ENCODE measurements at regions of chr6 and their contacts with region 1.

Region 1: DNA sequence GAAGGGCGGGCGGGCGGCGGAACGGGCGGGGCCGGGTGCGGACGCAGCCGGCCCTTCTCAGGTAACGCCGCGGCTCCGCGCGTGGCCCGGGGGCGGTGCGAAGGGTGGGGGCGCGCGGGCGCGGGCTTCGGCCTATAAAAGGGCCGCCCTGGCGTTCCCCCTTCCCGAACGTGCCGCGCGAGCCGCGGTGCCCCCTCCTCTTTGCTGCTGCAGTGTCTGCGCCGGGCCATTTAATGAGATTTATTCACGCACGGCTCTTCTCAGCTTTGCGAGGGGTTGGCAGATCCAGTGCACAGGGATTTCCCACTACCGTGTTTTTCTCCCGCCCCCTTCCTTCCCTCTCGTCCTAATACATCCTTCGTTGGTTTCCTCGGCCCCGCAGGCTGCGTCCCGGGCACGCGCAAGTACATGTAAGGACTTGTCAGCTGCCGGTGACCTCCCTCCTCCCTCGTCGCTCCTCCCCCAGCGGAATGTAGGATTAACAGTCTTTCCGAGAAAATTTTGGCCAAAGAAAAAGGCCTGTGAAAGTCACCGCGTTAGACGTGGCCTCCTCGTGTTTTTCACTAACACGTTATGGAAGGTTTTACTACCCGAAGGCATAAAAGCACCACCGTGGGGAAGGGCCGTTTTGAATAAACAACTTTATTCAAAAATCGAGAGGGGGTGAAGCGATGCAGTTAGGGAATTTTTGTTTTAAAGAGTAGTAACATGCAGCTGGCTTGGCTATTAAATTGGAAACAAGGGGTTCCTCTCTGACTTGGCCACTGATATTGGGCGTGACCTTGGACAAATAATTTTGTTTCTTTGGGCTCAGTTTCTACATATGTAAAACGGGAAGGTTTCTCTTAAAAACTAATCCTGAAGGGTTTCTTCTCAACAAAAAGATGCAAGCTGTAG is 966 bp upstream of the REV3L start:
- DNase-seq: peak; percentile 92
- H3K4me3 Mint-ChIP-seq: peak overlapping the region; percentile 97
- H3K27ac Mint-ChIP-seq: peak overlapping the region; percentile 99
- H3K4me1 Mint-ChIP-seq: peaks cover 47% of the 10 kb centered on the region
- H3K27me3 Mint-ChIP-seq: no peaks in the 10 kb centered on the region

Region 2: GRCh38 chr6:110958329-110959192 is 525.4 kb before region 1 on chr6 and contains the start of gene GTF3C6:
- CTCF ChIA-PET with region 1: no interaction called
- intact Hi-C with region 1: loop called (anchors 5 kb)
- DNase-seq: peak; percentile 94
- H3K4me3 Mint-ChIP-seq: peak within 1 kb of the TSS; percentile 94
- H3K27ac Mint-ChIP-seq: peak within 1 kb of the TSS; percentile 96
- H3K4me1 Mint-ChIP-seq: peaks cover 14% of the 10 kb centered on the region
- H3K27me3 Mint-ChIP-seq: no peaks in the 10 kb centered on the region
- total RNA-seq, gene GTF3C6: 81.6 to 84.7 TPM

Region 3: DNA sequence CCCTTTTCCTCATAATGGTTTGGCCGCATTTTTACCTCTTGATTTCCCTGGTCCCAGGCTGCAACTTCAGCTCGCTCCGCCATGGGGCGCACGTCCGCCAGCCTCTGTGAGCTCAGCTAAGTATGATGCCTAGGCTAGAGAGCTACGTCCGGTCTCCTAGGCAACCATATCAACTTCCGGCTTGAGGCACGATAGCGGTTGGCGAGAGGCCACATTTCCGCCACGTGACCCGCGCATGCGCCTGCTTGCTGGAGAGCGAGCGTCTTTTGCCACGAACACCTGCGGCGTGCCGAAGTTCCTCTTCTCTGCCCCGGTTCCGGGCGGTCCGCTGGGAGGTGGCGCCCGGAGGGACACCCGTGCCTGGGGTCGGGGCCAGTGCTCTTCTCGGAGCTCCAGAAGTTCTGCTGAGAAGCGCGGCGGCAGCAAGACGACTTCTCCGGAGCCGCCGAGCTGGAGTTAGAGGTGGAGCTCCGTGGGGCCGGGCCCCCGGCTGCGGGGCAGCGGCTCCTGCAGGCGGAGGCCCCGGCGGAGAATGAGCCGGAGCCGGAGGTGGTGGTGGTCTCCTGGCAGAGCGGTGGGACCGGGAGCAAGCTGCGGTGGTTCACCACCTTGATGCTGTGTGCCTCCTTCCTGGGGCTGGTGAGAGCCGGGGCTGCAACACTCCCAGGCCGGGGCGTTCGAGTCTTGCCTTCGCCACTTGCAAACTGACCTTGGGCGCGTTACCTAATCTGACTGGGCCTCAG is 224.7 kb before region 1 on chr6:
- CTCF ChIA-PET with region 1: interaction called, 37 read pairs
- intact Hi-C with region 1: loop called (anchors 1 kb)
- DNase-seq: peak; percentile 99
- H3K4me3 Mint-ChIP-seq: peak overlapping the region; percentile 77
- H3K27ac Mint-ChIP-seq: peak overlapping the region; percentile 79
- H3K4me1 Mint-ChIP-seq: peaks cover 34% of the 10 kb centered on the region
- H3K27me3 Mint-ChIP-seq: no peaks in the 10 kb centered on the region

Region 4: DNA sequence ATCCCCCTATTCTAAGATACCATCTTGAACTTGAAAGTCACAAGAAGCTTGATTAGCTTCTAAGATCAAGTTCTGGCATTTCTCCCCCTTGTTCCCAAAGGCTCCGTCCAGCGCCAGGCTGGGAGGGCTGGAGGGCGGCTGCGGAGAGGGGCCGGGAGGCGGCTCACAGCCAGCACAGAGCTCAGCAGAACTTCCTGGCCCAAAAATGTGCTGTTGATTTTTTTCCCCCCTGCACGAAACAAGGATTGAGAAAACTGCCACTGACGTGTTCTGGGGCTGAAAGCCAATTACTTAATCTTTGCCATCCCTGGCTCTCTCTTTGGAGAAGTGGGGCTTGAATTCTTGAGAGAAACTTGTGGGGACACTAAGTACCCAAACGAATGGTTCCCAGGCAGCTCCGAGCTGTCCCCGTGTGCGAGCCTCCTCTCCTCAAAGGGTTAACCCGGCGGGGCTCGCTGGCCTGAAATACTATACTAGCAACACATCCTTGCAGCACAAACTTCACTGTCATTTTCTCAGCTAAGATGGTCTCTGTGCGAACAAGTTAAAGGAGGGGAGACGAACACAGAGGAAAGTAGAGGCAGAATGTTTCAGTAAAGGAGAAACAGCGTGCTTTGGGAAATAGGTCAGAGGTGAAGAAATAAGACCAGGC is 121.2 kb after region 1 on chr6:
- CTCF ChIA-PET with region 1: interaction called, 3 read pairs
- intact Hi-C with region 1: loop called (anchors 1 kb)
- DNase-seq: peak; percentile 38
- H3K4me3 Mint-ChIP-seq: peak overlapping the region; percentile 82
- H3K27ac Mint-ChIP-seq: peak overlapping the region; percentile 93
- H3K4me1 Mint-ChIP-seq: peaks cover 39% of the 10 kb centered on the region
- H3K27me3 Mint-ChIP-seq: no peaks in the 10 kb centered on the region

Region 5: GRCh38 chr6:111873178-111874024 is 389.4 kb after region 1 on chr6 and contains the start of gene FYN:
- CTCF ChIA-PET with region 1: no interaction called
- intact Hi-C with region 1: loop called (anchors 2 kb)
- DNase-seq: peak; percentile 99
- H3K4me3 Mint-ChIP-seq: peak within 1 kb of the TSS; percentile 96
- H3K27ac Mint-ChIP-seq: peak within 1 kb of the TSS; percentile 97
- H3K4me1 Mint-ChIP-seq: peaks cover 32% of the 10 kb centered on the region
- H3K27me3 Mint-ChIP-seq: no peaks in the 10 kb centered on the region
- total RNA-seq, gene FYN: 236 to 244 TPM

Region 6: GRCh38 chr6:112087136-112087911 is 603.3 kb after region 1 on chr6 and contains the starts of genes FAM229B and TUBE1:
- CTCF ChIA-PET with region 1: no interaction called
- intact Hi-C with region 1: loop called (anchors 5 kb)
- DNase-seq: peak; percentile 95
- H3K4me3 Mint-ChIP-seq: no peak within 1 kb of the TSS
- H3K27ac Mint-ChIP-seq: no peak within 1 kb of the TSS
- H3K4me1 Mint-ChIP-seq: peaks cover 7% of the 10 kb centered on the region
- H3K27me3 Mint-ChIP-seq: no peaks in the 10 kb centered on the region
- total RNA-seq, gene FAM229B: 9.5 to 10.2 TPM
- total RNA-seq, gene TUBE1: 53.7 to 62.7 TPM